K562 (cell line): ENCODE measurements at regions of chr6 and their contacts with region 1.

Region 1: DNA sequence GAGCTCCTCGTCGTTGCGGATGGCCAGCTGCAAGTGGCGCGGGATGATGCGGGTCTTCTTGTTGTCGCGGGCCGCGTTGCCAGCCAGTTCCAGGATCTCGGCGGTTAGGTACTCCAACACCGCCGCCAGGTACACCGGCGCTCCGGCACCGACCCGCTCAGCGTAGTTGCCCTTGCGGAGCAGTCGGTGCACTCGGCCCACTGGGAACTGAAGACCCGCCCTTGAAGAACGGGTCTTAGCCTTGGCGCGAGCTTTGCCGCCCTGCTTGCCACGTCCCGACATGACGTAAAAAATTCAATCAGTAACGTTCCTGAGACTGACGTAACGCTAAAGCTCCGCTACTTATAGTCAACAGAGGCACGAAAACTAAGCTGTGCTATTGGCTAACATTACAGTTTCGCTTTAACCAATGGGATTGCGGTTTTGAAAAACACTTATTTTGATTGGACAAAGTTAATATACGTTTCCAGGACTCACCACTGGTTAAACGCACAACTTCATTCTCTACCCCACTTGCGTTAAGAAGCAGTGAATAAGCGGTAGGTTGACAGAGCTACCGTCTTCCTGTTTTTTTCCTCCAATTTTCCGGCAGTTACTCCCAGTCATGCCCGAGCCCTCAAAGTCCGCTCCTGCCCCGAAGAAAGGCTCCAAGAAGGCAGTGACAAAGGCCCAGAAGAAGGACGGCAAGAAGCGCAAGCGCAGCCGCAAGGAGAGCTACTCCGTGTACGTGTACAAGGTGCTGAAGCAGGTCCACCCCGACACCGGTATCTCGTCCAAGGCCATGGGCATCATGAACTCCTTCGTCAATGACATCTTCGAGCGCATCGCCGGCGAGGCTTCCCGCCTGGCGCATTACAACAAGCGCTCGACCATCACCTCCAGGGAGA is 73.9 kb downstream of the OR2B2 start:
- DNase-seq: peak; percentile 85 to 99 (median 92)
- ATAC-seq: peak; percentile 74
- H3K4me3 ChIP-seq: peak overlapping the region; percentile 56
- H3K27ac ChIP-seq: peak overlapping the region; percentile 88
- H3K4me1 ChIP-seq: peaks cover 12 to 13% of the 10 kb centered on the region in 2 experiments; a peak in 3 of 5 replicates
- H3K27me3 ChIP-seq: no peaks in the 10 kb centered on the region
- CTCF ChIP-seq: peak in 1 of 3 experiments; percentile 9; a peak in 1 of 6 replicates
- EP300 ChIP-seq: peak; percentile 35
- POLR2A ChIP-seq: peak; percentile 99
- RAD21 ChIP-seq: peak in 1 of 2 experiments; percentile 4; a peak in 1 of 4 replicates

Region 2: GRCh38 chr6:26204332-26205165 is 1633.8 kb before region 1 on chr6:
- CTCF ChIA-PET with region 1: no interaction called
- POLR2A ChIA-PET with region 1: interaction called, 3 read pairs
- in situ Hi-C with region 1: no loop called
- intact Hi-C with region 1: loop called (anchors 10 kb)
- DNase-seq: peak; percentile 85 to 99 (median 92)
- ATAC-seq: peak; percentile 67
- H3K4me3 ChIP-seq: peak overlapping the region; percentile 57
- H3K27ac ChIP-seq: peak overlapping the region; percentile 99
- H3K4me1 ChIP-seq: peaks cover 9 to 21% of the 10 kb centered on the region in 2 experiments; a peak in 4 of 5 replicates
- H3K27me3 ChIP-seq: no peaks in the 10 kb centered on the region
- CTCF ChIP-seq: peak in 2 of 3 experiments; percentile 67 to 70; a peak in 5 of 6 replicates
- EP300 ChIP-seq: peak; percentile 95
- POLR2A ChIP-seq: peak; percentile 100
- RAD21 ChIP-seq: peak in 1 of 2 experiments; percentile 29; a peak in 2 of 4 replicates

Region 3: GRCh38 chr6:27772261-27773001 is 65.9 kb before region 1 on chr6:
- CTCF ChIA-PET with region 1: no interaction called
- POLR2A ChIA-PET with region 1: interaction called, 15 read pairs
- in situ Hi-C with region 1: no loop called
- intact Hi-C with region 1: no loop called
- DNase-seq: peak; percentile 83 to 95 (median 84)
- ATAC-seq: peak; percentile 92
- H3K4me3 ChIP-seq: no peak overlapping the region
- H3K27ac ChIP-seq: peak overlapping the region; percentile 75
- H3K4me1 ChIP-seq: peaks cover 22 to 40% of the 10 kb centered on the region in 2 experiments
- H3K27me3 ChIP-seq: no peaks in the 10 kb centered on the region
- CTCF ChIP-seq: peak; percentile 97 to 99 (median 97)
- EP300 ChIP-seq: peak; percentile 35
- POLR2A ChIP-seq: no peak
- RAD21 ChIP-seq: peak; percentile 94 to 97

Region 4: DNA sequence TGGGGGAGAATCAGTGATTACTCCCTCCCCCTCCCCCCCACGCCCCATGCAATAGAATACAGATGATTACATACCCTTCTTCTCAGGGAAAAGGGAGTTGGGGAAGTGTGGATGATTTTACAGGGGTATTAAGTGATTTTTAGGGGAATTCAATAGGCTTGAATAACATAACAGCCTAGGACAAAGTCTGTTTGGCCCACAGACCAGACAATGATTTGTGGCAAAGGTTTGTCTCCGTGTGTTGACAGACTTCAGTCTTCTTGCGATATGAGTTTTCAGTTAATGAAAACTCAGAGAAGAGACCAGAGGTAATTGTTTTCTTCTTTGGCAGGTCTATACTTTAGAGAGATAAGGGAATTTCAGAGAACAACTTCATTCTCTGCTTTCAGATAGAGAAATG is 21.4 kb before region 1 on chr6:
- CTCF ChIA-PET with region 1: no interaction called
- POLR2A ChIA-PET with region 1: interaction called, 368 read pairs
- in situ Hi-C with region 1: no loop called
- intact Hi-C with region 1: no loop called
- DNase-seq: no peak
- ATAC-seq: no peak
- H3K4me3 ChIP-seq: no peak overlapping the region
- H3K27ac ChIP-seq: peak overlapping the region; percentile 49; the same call in 1 of the 3 replicates
- H3K4me1 ChIP-seq: peaks cover 10 to 20% of the 10 kb centered on the region in 2 experiments; a peak in 4 of 5 replicates
- H3K27me3 ChIP-seq: no peaks in the 10 kb centered on the region
- CTCF ChIP-seq: no peak
- EP300 ChIP-seq: peak; percentile 26; the same call in 1 of the 2 replicates
- POLR2A ChIP-seq: no peak
- RAD21 ChIP-seq: no peak

Region 5: DNA sequence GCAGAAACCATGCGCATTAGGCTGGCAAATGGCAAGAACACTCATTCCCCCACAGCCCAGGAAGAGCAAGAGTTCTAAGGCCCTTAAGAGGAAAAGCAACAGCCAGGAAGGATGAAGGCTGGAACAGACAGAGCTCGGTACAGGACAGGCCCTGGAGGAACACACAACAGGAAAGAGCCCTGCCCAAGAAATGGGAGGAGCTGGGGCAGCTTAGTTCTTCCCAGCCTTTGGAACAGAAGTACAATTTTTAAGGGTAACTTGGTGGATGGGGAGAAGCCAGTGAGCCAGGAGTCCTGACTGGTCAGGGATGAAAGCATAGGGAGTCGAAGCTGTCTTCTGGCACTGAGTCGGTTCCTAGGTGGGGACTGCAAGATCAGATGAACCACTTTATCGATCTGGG is 41.5 kb after region 1 on chr6:
- CTCF ChIA-PET with region 1: no interaction called
- POLR2A ChIA-PET with region 1: interaction called, 241 read pairs
- in situ Hi-C with region 1: no loop called
- intact Hi-C with region 1: no loop called
- DNase-seq: no peak
- ATAC-seq: peak; percentile 65
- H3K4me3 ChIP-seq: no peak overlapping the region
- H3K27ac ChIP-seq: no peak overlapping the region
- H3K4me1 ChIP-seq: peaks cover 3 to 6% of the 10 kb centered on the region in 2 experiments; a peak in 3 of 5 replicates
- H3K27me3 ChIP-seq: no peaks in the 10 kb centered on the region
- CTCF ChIP-seq: no peak
- EP300 ChIP-seq: no peak
- POLR2A ChIP-seq: no peak
- RAD21 ChIP-seq: no peak

Region 6: GRCh38 chr6:28355743-28356665 is 517.7 kb after region 1 on chr6:
- CTCF ChIA-PET with region 1: no interaction called
- POLR2A ChIA-PET with region 1: no interaction called
- in situ Hi-C with region 1: no loop called
- intact Hi-C with region 1: loop called (anchors 10 kb)
- DNase-seq: peak; percentile 73 to 94 (median 75)
- ATAC-seq: peak; percentile 80
- H3K4me3 ChIP-seq: peak overlapping the region; percentile 42
- H3K27ac ChIP-seq: peak overlapping the region; percentile 76
- H3K4me1 ChIP-seq: peaks cover 44 to 49% of the 10 kb centered on the region in 2 experiments
- H3K27me3 ChIP-seq: no peaks in the 10 kb centered on the region; a peak in 1 of 5 replicates
- CTCF ChIP-seq: peak; percentile 79 to 95 (median 84)
- EP300 ChIP-seq: peak; percentile 57; the same call in 1 of the 2 replicates
- POLR2A ChIP-seq: no peak
- RAD21 ChIP-seq: peak; percentile 91 to 94